Activated B cell treated with CpG ODN at 0.5 μM for 24 hours (primary cell): ENCODE measurements at regions of chr7 and their contacts with region 1.

Region 1: GRCh38 chr7:78189762-78190161 is 391.2 kb downstream of the PHTF2 start:
- DNase-seq: no peak
- ATAC-seq: no peak
- H3K4me3 Mint-ChIP-seq: no peak overlapping the region
- H3K27ac Mint-ChIP-seq: no peak overlapping the region
- H3K4me1 Mint-ChIP-seq: no peaks in the 10 kb centered on the region
- H3K27me3 Mint-ChIP-seq: peaks cover 11% of the 10 kb centered on the region
- CTCF ChIP-seq: no peak

Region 2: GRCh38 chr7:78169992-78170391 is 19.8 kb before region 1 on chr7:
- CTCF ChIA-PET with region 1: no interaction called
- POLR2A ChIA-PET with region 1: no interaction called
- intact Hi-C with region 1: loop called (anchors 1 kb)
- DNase-seq: no peak
- ATAC-seq: no peak
- H3K4me3 Mint-ChIP-seq: no peak overlapping the region
- H3K27ac Mint-ChIP-seq: no peak overlapping the region
- H3K4me1 Mint-ChIP-seq: no peaks in the 10 kb centered on the region
- H3K27me3 Mint-ChIP-seq: peaks cover 4% of the 10 kb centered on the region
- CTCF ChIP-seq: no peak